Lower lobe of right lung (tissue), 2 donors: ENCODE measurements at regions of chr5 and their contacts with region 1.

Region 1: DNA sequence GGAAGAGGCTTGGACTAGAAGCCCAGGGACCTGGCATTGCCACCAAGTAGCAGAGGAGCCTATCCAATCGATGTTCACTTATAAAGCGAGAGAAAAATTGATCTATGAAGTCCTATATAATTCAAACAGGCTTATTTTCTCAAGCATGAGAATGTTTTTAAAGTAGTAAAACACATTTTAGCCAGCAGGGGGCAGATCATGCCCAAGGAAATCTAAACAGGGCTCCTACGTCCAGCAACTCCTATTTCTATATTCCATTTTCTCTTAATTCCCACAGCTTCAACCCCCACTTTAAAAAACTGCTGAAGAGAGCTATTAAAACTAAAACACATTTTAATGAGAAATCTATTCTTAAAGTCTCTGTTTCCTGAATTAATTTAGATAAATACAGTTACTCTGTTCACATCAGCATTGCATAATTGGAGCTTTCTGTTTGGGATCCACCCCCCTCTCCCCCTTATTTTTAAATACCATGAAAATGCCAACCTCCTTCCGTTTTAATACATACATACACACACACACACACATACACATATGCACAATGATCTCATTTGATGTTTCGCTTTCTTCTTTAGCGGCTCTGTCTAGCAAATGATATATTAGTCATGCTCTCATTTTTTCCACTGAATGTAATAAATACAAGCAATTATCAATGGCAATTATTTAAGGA is 144.9 kb downstream of the MYO10 start:
- DNase-seq: no peak
- ATAC-seq: peak in 1 of 2 donors; percentile 70
- H3K4me3 ChIP-seq: no peak overlapping the region
- H3K27ac ChIP-seq: no peak overlapping the region
- H3K4me1 ChIP-seq: peaks cover 11% of the 10 kb centered on the region
- H3K27me3 ChIP-seq: no peaks in the 10 kb centered on the region
- CTCF ChIP-seq: peak; percentile 68

Region 2: DNA sequence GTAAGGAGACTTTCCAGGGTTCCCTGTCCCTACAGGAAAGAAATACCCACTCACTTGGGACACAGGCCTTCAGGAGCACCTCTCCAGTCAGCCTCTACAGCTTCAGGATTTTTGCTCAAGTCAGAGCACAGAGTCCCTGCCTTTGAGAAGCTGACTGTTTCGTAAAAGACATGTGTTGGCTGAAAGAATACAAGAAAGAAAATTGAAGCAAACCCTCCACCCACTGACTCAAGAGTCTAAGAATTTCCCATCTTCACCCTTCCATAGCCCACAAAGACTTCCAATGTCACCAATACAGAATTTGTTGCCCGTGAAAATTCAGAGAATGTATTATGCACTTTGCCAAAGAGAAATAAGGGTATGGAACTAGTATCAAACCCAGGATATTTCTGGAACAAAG is 272.6 kb before region 1 on chr5:
- intact Hi-C with region 1: no loop called
- DNase-seq: no peak
- ATAC-seq: no peak
- H3K4me3 ChIP-seq: no peak overlapping the region
- H3K27ac ChIP-seq: no peak overlapping the region
- H3K4me1 ChIP-seq: no peaks in the 10 kb centered on the region
- H3K27me3 ChIP-seq: no peaks in the 10 kb centered on the region
- CTCF ChIP-seq: no peak

Region 3: GRCh38 chr5:16736158-16736995 is 54.8 kb before region 1 on chr5:
- intact Hi-C with region 1: no loop called
- DNase-seq: peak; percentile 71
- ATAC-seq: peak; percentile 92 to 96
- H3K4me3 ChIP-seq: no peak overlapping the region
- H3K27ac ChIP-seq: peak overlapping the region; percentile 66
- H3K4me1 ChIP-seq: peaks cover 35% of the 10 kb centered on the region
- H3K27me3 ChIP-seq: no peaks in the 10 kb centered on the region
- CTCF ChIP-seq: no peak

Region 4: GRCh38 chr5:16894236-16895057 is 103.3 kb after region 1 on chr5:
- intact Hi-C with region 1: no loop called
- DNase-seq: no peak
- ATAC-seq: peak; percentile 73 to 84
- H3K4me3 ChIP-seq: no peak overlapping the region
- H3K27ac ChIP-seq: no peak overlapping the region
- H3K4me1 ChIP-seq: peaks cover 49% of the 10 kb centered on the region
- H3K27me3 ChIP-seq: no peaks in the 10 kb centered on the region
- CTCF ChIP-seq: no peak

Region 5: GRCh38 chr5:17189381-17190036 is 398.3 kb after region 1 on chr5:
- intact Hi-C with region 1: loop called (anchors 10 kb)
- DNase-seq: peak; percentile 77
- ATAC-seq: peak; percentile 66 to 86
- H3K4me3 ChIP-seq: no peak overlapping the region
- H3K27ac ChIP-seq: no peak overlapping the region
- H3K4me1 ChIP-seq: peaks cover 24% of the 10 kb centered on the region
- H3K27me3 ChIP-seq: no peaks in the 10 kb centered on the region
- CTCF ChIP-seq: peak; percentile 82